CD4-positive, alpha-beta T cell (primary cell): ENCODE measurements at regions of chr1 and their contacts with region 1.

Region 1: DNA sequence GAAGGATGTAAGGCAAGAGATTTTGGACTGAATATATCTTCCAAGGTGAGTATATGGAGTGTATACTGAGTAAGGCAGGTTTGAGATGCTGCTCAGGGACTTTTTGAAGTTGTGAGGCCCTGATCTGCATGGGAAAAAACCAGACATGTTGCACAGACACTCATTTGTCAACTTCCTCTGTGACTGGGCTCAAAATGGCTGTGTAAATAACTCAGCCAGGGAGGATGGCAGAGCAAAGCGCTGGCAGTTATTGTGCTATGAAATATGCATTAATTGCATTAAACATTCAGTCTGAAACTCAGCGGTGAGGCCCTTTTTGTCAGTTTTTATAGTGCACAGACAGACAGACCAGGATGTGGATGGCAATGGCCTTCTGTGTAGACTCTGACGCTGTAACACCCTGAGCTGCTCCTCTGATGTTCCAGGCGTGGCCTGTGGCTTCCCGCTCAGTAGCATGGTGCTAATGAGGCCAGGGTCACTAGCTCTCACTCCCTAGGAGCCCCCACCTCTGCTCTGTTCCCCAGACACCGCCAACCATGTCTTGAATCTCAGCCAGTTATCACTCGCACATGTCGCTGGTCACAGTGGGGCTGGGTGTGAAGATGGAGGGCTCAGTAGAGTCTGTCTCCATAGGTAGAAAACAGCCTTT is 307.0 kb upstream of the PROX1 start:
- DNase-seq: no peak
- ATAC-seq: no peak
- H3K4me3 ChIP-seq: no peak overlapping the region
- H3K4me3 Mint-ChIP-seq: no peak overlapping the region
- H3K27ac ChIP-seq: no peak overlapping the region
- H3K27ac Mint-ChIP-seq: no peak overlapping the region
- H3K4me1 ChIP-seq: no peaks in the 10 kb centered on the region
- H3K4me1 Mint-ChIP-seq: no peaks in the 10 kb centered on the region
- H3K27me3 ChIP-seq: no peaks in the 10 kb centered on the region
- H3K27me3 Mint-ChIP-seq: no peaks in the 10 kb centered on the region
- CTCF ChIP-seq: no peak

Region 2: GRCh38 chr1:213761845-213762407 is 81.1 kb after region 1 on chr1:
- CTCF ChIA-PET with region 1: no interaction called
- POLR2A ChIA-PET with region 1: no interaction called
- intact Hi-C with region 1: loop called in 1 of 2 experiments (anchors 5 kb)
- DNase-seq: peak; percentile 15 to 69 (median 41)
- ATAC-seq: peak; percentile 100
- H3K4me3 ChIP-seq: no peak overlapping the region
- H3K4me3 Mint-ChIP-seq: peak overlapping the region; percentile 49
- H3K27ac ChIP-seq: no peak overlapping the region
- H3K27ac Mint-ChIP-seq: peak overlapping the region; percentile 77
- H3K4me1 ChIP-seq: peaks cover 11% of the 10 kb centered on the region
- H3K4me1 Mint-ChIP-seq: peaks cover 16% of the 10 kb centered on the region
- H3K27me3 ChIP-seq: no peaks in the 10 kb centered on the region
- H3K27me3 Mint-ChIP-seq: no peaks in the 10 kb centered on the region
- CTCF ChIP-seq: no peak

Region 3: DNA sequence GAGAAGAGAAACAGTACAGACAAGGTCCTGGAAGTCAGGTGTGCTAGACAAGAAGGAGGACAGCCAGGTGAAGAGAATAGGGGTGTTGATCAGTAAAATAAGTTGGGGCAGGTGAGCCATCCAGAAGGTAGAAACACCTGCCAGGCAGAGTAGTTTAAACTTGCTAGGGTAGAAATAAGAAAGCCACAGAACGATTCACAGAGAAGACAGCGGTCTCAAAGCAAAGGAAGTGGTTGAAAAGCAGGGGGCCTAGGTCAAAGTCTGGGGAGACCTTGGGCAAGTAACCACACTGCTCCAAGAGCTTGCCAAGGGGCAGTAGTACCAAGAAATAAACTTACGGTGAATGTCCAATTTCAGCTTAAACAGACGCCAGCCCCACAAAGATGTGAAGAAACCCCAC is 190.4 kb after region 1 on chr1:
- CTCF ChIA-PET with region 1: no interaction called
- POLR2A ChIA-PET with region 1: no interaction called
- intact Hi-C with region 1: no loop called
- DNase-seq: peak in 1 of 14 experiments; percentile 5
- ATAC-seq: no peak
- H3K4me3 ChIP-seq: no peak overlapping the region
- H3K4me3 Mint-ChIP-seq: no peak overlapping the region
- H3K27ac ChIP-seq: no peak overlapping the region
- H3K27ac Mint-ChIP-seq: peak overlapping the region; percentile 11
- H3K4me1 ChIP-seq: peaks cover 19% of the 10 kb centered on the region
- H3K4me1 Mint-ChIP-seq: peaks cover 38% of the 10 kb centered on the region
- H3K27me3 ChIP-seq: no peaks in the 10 kb centered on the region
- H3K27me3 Mint-ChIP-seq: no peaks in the 10 kb centered on the region
- CTCF ChIP-seq: no peak